ENCODE measurements at regions of chr1 and their contacts with region 1.

Region 1: DNA sequence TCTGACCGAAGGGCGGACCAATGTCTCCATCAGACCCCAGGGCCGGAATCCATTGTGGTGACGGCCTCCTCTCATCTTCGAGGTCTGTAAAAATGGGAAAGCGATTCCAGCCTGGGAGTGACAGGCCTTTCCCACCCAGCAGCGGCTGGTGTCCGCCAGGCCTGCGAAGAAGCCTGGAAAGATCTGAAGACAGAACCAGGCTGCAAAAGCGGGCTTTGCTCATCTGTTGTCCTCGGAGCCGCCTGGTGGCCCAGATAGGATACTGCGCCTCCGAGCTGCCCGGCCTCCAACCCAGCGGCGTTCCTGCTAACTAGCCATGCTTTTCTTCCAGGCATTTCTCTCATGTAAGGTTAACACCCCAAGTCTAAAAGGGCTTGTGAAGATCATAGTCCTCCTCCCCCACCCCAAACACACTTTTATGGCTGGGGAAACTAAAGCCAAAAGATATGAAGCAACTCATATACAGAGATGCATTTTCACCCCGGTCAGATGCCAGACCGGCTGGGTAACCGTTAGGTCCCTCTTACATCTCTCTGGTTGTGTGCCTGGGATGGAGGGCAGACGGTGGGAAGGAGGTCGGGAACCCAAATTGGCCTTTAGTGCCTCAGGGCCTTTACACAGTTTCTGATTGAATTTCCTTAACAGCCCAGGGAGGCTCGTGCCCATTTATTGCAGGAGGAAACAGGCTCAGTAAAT is 1.9 kb upstream of the DHRS3 start:
- DNase-seq: peak; percentile 64 to 83 (median 74)
- ATAC-seq: peak; percentile 69
- H3K4me3 ChIP-seq: peak overlapping the region; percentile 81
- H3K4me3 Mint-ChIP-seq: peak overlapping the region; percentile 90 to 99 (median 99)
- H3K27ac ChIP-seq: peak overlapping the region; percentile 86
- H3K27ac Mint-ChIP-seq: peak overlapping the region; percentile 62 to 98 (median 94)
- H3K4me1 ChIP-seq: peaks cover 22 to 35% of the 10 kb centered on the region in 2 donors
- H3K4me1 Mint-ChIP-seq: peaks cover 27 to 41% (median 38%) of the 10 kb centered on the region in 7 donors
- H3K27me3 ChIP-seq: no peaks in the 10 kb centered on the region
- H3K27me3 Mint-ChIP-seq: peaks cover 0 to 13% (median 0%) of the 10 kb centered on the region in 5 donors

Region 2: GRCh38 chr1:11805447-11806306 is 814.3 kb before region 1 on chr1 and contains the starts of genes CLCN6 and MTHFR:
- CTCF ChIA-PET with region 1: no interaction called
- POLR2A ChIA-PET with region 1: no interaction called
- intact Hi-C with region 1: loop called in 1 of 2 experiments (anchors 10 kb)
- DNase-seq: peak; percentile 93 to 98 (median 97)
- ATAC-seq: peak; percentile 95
- H3K4me3 ChIP-seq: peak within 1 kb of the TSS; percentile 86
- H3K4me3 Mint-ChIP-seq: peak within 1 kb of the TSS; percentile 94 to 100 (median 98)
- H3K27ac ChIP-seq: peak within 1 kb of the TSS; percentile 92
- H3K27ac Mint-ChIP-seq: peak within 1 kb of the TSS; percentile 94 to 99 (median 96)
- H3K4me1 ChIP-seq: peaks cover 39 to 40% of the 10 kb centered on the region in 2 donors
- H3K4me1 Mint-ChIP-seq: peaks cover 37 to 72% (median 60%) of the 10 kb centered on the region in 7 donors
- H3K27me3 ChIP-seq: no peaks in the 10 kb centered on the region
- H3K27me3 Mint-ChIP-seq: no peaks in the 10 kb centered on the region
- total RNA-seq, gene CLCN6: 13.3 to 23.0 (median 20.9) TPM
- total RNA-seq, gene MTHFR: 31.0 to 64.4 (median 55.2) TPM

Region 3: GRCh38 chr1:12166834-12167492 is 453.0 kb before region 1 on chr1 and contains the start of gene TNFRSF1B:
- CTCF ChIA-PET with region 1: no interaction called
- POLR2A ChIA-PET with region 1: no interaction called
- intact Hi-C with region 1: loop called in 1 of 2 experiments (anchors 5 kb)
- DNase-seq: peak; percentile 42 to 84 (median 51)
- ATAC-seq: peak; percentile 82
- H3K4me3 ChIP-seq: peak within 1 kb of the TSS; percentile 84
- H3K4me3 Mint-ChIP-seq: peak within 1 kb of the TSS; percentile 94 to 100 (median 98)
- H3K27ac ChIP-seq: peak within 1 kb of the TSS; percentile 91
- H3K27ac Mint-ChIP-seq: peak within 1 kb of the TSS; percentile 94 to 100 (median 98)
- H3K4me1 ChIP-seq: peaks cover 19 to 59% of the 10 kb centered on the region in 2 donors
- H3K4me1 Mint-ChIP-seq: peaks cover 42 to 83% (median 60%) of the 10 kb centered on the region in 7 donors
- H3K27me3 ChIP-seq: no peaks in the 10 kb centered on the region
- H3K27me3 Mint-ChIP-seq: no peaks in the 10 kb centered on the region
- total RNA-seq, gene TNFRSF1B: 38.6 to 278 (median 60.3) TPM

Region 4: GRCh38 chr1:12344596-12345349 is 275.2 kb before region 1 on chr1:
- CTCF ChIA-PET with region 1: interaction called, 3 read pairs
- POLR2A ChIA-PET with region 1: no interaction called
- intact Hi-C with region 1: loop called in 1 of 2 experiments (anchors 1 kb)
- DNase-seq: peak in 6 of 9 donors; percentile 1 to 31 (median 8)
- ATAC-seq: peak; percentile 56
- H3K4me3 ChIP-seq: peak overlapping the region; percentile 22
- H3K4me3 Mint-ChIP-seq: peak overlapping the region; percentile 72 to 87 (median 82)
- H3K27ac ChIP-seq: peak overlapping the region; percentile 64
- H3K27ac Mint-ChIP-seq: peak overlapping the region; percentile 90 to 98 (median 95)
- H3K4me1 ChIP-seq: peaks cover 17 to 38% of the 10 kb centered on the region in 2 donors
- H3K4me1 Mint-ChIP-seq: peaks cover 46 to 64% (median 63%) of the 10 kb centered on the region in 7 donors
- H3K27me3 ChIP-seq: no peaks in the 10 kb centered on the region
- H3K27me3 Mint-ChIP-seq: no peaks in the 10 kb centered on the region

Region 5: GRCh38 chr1:12434174-12434573 is 185.8 kb before region 1 on chr1:
- CTCF ChIA-PET with region 1: interaction called, 3 read pairs
- POLR2A ChIA-PET with region 1: interaction called, 7 read pairs
- intact Hi-C with region 1: loop called in 1 of 2 experiments (anchors 1 kb)
- DNase-seq: peak in 6 of 9 donors; percentile 32 to 70 (median 46)
- ATAC-seq: peak; percentile 79
- H3K4me3 ChIP-seq: peak overlapping the region; percentile 44
- H3K4me3 Mint-ChIP-seq: peak overlapping the region; percentile 54 to 76 (median 70)
- H3K27ac ChIP-seq: peak overlapping the region; percentile 58
- H3K27ac Mint-ChIP-seq: peak overlapping the region; percentile 69 to 92 (median 84)
- H3K4me1 ChIP-seq: peaks cover 52 to 56% of the 10 kb centered on the region in 2 donors
- H3K4me1 Mint-ChIP-seq: peaks cover 46 to 85% (median 71%) of the 10 kb centered on the region in 7 donors
- H3K27me3 ChIP-seq: no peaks in the 10 kb centered on the region
- H3K27me3 Mint-ChIP-seq: no peaks in the 10 kb centered on the region

Region 6: GRCh38 chr1:12477936-12478611 is 141.9 kb before region 1 on chr1:
- CTCF ChIA-PET with region 1: interaction called, 6 read pairs
- POLR2A ChIA-PET with region 1: interaction called, 11 read pairs
- intact Hi-C with region 1: loop called (anchors 1 to 10 kb)
- DNase-seq: peak in 1 of 9 donors; percentile 27
- ATAC-seq: peak; percentile 19
- H3K4me3 ChIP-seq: peak overlapping the region; percentile 42
- H3K4me3 Mint-ChIP-seq: peak overlapping the region; percentile 71 to 86 (median 78)
- H3K27ac ChIP-seq: peak overlapping the region; percentile 66
- H3K27ac Mint-ChIP-seq: peak overlapping the region; percentile 89 to 99 (median 96)
- H3K4me1 ChIP-seq: peaks cover 64 to 89% of the 10 kb centered on the region in 2 donors
- H3K4me1 Mint-ChIP-seq: peaks cover 58 to 97% (median 94%) of the 10 kb centered on the region in 7 donors
- H3K27me3 ChIP-seq: no peaks in the 10 kb centered on the region
- H3K27me3 Mint-ChIP-seq: no peaks in the 10 kb centered on the region

Region 7: DNA sequence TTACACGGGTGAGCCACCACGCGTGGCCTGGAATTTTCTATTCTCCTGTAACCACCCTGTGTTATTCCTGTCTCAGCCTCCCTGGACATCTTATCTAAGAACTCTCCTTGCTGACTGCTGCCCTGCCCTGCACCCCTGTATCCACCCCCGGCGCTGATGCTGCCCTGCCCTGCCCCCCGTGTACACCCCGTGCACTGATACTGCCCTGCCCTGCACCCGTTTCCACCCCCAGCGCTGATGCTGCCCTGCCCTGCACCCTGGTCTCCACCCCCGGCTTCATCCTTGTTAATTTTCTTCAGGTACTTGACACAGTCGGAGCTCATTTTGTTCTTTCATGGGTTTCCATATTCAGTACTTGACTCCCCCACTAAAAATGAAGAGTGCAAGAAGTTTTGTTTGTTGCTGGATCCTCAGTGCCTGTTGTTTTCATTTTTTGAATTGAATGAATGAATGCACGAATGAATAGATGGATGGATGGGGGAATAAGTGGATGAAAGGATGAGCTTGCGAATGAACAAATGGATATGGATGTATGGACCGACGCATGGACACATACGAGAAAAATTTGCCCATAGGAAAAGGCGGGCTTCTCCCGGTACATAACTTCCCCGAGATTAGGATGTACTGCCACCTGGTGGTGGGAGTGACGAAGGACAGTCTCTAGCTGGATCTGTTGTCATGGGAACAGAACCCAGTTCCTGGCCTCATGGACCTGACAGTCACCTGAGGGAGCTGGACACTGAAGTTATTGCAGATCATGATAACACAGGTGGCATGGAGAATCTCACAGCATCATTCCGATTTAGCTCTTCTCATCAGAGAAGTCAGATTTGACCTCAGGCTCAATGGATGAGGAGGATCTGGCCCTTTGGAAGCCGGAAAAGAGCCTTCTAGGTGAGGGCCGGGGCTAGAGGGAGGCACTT is 38.9 kb after region 1 on chr1:
- CTCF ChIA-PET with region 1: interaction called, 8 read pairs
- POLR2A ChIA-PET with region 1: no interaction called
- intact Hi-C with region 1: loop called (anchors 1 kb)
- DNase-seq: peak; percentile 43 to 74 (median 58)
- ATAC-seq: peak; percentile 84
- H3K4me3 ChIP-seq: no peak overlapping the region
- H3K4me3 Mint-ChIP-seq: peak overlapping the region in 2 of 10 donors; percentile 35 to 54
- H3K27ac ChIP-seq: no peak overlapping the region
- H3K27ac Mint-ChIP-seq: peak overlapping the region in 2 of 9 donors; percentile 3 to 43
- H3K4me1 ChIP-seq: no peaks in the 10 kb centered on the region
- H3K4me1 Mint-ChIP-seq: peaks cover 0 to 10% (median 6%) of the 10 kb centered on the region in 7 donors
- H3K27me3 ChIP-seq: no peaks in the 10 kb centered on the region
- H3K27me3 Mint-ChIP-seq: peaks cover 0 to 11% (median 0%) of the 10 kb centered on the region in 5 donors

Region 8: GRCh38 chr1:14259191-14259757 is 1639.3 kb after region 1 on chr1:
- CTCF ChIA-PET with region 1: no interaction called
- POLR2A ChIA-PET with region 1: no interaction called
- intact Hi-C with region 1: no loop called
- DNase-seq: no peak
- ATAC-seq: no peak
- H3K4me3 ChIP-seq: no peak overlapping the region
- H3K4me3 Mint-ChIP-seq: no peak overlapping the region
- H3K27ac ChIP-seq: no peak overlapping the region
- H3K27ac Mint-ChIP-seq: no peak overlapping the region
- H3K4me1 ChIP-seq: no peaks in the 10 kb centered on the region
- H3K4me1 Mint-ChIP-seq: no peaks in the 10 kb centered on the region
- H3K27me3 ChIP-seq: no peaks in the 10 kb centered on the region
- H3K27me3 Mint-ChIP-seq: peaks cover 5 to 28% (median 8%) of the 10 kb centered on the region in 5 donors